PC-3 (cell line): ENCODE measurements at regions of chrX and their contacts with region 1.

Region 1: DNA sequence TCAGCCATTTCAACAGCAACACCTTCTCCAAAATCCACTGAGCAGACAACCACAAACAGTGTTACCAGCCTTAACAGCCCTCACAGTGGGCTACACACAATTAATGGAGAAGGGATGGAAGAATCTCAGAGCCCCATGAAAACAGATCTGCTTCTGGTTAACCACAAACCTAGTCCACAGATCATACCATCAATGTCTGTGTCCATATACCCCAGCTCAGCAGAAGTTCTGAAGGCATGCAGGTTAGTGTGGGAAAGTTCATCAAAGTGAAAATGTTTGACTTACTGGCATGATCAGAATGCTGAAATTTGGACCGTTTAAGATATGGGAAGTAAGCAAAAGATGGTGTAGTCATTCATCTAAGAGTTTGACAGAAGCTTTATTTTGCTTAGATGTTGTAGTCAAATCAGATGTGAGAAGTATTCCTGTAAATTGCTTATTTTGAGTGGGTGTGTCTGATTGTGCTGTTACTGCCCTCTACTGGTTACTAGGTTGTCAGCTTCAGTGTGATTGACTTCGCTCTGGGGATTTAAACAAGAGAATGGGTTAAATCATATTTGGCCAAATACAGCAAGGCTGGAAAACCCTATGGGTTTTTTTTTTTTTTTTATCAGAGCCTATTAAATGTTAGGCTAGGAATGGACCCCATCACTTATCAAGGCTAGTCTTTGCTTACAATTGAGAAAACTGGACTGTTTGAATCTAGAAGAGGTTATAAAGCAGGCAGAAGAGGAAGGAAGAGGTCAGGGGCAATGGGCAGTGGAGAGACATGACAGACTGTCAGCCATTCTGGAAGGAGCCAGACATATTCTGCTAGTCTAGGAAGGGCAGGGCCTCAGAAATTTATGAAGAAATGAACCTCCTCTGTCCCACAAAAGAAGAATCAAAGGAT is 130.3 kb downstream of the DIPK2B start:
- DNase-seq: peak; percentile 68
- ATAC-seq: peak; percentile 43; the same call in 1 of the 2 replicates
- H3K4me3 ChIP-seq: no peak overlapping the region
- H3K27ac ChIP-seq: no peak overlapping the region
- H3K4me1 ChIP-seq: peaks cover 6% of the 10 kb centered on the region; the same call in 1 of the 2 replicates
- H3K27me3 ChIP-seq: no peaks in the 10 kb centered on the region
- CTCF ChIP-seq: peak; percentile 81

Region 2: DNA sequence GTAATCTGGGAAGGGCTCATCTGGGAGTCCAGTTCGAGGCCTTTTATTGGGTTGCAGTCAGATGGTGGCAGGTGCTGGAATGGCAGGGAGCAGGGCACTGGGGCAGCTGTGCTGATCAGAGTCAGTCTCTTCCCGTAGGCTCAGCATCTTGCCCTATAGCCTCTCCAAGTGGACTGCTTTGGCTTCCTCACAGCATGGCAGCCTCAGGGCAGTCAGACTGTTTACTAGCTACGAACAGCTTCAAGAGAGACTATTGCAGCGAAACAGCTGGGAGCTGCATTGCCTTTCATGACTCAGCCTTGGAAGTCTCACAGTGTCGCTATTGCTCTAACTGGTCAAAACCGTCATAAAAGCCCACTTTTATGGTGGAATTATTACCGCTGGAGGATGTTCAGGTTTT is 253.3 kb before region 1 on chrX:
- CTCF ChIA-PET with region 1: no interaction called
- POLR2A ChIA-PET with region 1: no interaction called
- intact Hi-C with region 1: no loop called
- DNase-seq: no peak
- ATAC-seq: no peak
- H3K4me3 ChIP-seq: no peak overlapping the region
- H3K27ac ChIP-seq: no peak overlapping the region
- H3K4me1 ChIP-seq: no peaks in the 10 kb centered on the region
- H3K27me3 ChIP-seq: no peaks in the 10 kb centered on the region
- CTCF ChIP-seq: no peak

Region 3: GRCh38 chrX:44974422-44974821 is 95.9 kb before region 1 on chrX:
- CTCF ChIA-PET with region 1: interaction called, 3 read pairs
- POLR2A ChIA-PET with region 1: no interaction called
- intact Hi-C with region 1: loop called (anchors 10 kb)
- DNase-seq: peak; percentile 76
- ATAC-seq: peak; percentile 97
- H3K4me3 ChIP-seq: peak overlapping the region; percentile 46
- H3K27ac ChIP-seq: peak overlapping the region; percentile 87
- H3K4me1 ChIP-seq: peaks cover 24% of the 10 kb centered on the region
- H3K27me3 ChIP-seq: no peaks in the 10 kb centered on the region
- CTCF ChIP-seq: no peak

Region 4: DNA sequence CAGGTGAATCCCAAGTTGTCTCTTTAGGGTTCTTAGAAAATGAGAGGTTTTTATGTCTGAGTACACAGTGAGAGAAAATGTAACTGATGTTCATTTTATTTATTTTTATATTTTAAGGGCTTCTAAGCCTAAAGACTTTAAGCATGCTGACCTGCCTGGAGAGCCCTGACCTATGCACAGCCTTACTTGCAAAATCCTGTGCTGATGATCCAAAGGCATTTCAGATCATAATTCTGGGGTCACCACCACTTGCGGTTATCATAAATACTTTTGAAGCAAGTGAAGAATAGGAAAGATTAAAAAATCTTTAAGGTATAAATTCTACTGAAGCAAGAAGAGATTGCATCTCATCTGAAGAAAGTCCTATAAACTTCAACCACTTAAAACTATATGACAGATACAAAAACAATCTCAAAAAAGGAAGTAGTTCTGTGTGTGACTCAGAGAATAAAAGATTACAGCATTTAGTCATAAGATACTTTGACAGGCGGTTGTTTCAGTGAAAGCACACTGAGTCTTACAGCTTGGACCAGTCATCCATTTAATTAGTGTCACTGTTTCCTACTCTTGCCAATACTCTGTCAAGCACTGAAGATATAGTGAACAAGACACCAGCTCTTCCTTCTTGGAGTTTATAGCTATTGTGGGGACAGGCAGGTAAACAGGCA is 375.5 kb after region 1 on chrX:
- CTCF ChIA-PET with region 1: no interaction called
- POLR2A ChIA-PET with region 1: no interaction called
- intact Hi-C with region 1: no loop called
- DNase-seq: peak; percentile 92
- ATAC-seq: peak; percentile 87
- H3K4me3 ChIP-seq: no peak overlapping the region
- H3K27ac ChIP-seq: peak overlapping the region; percentile 98
- H3K4me1 ChIP-seq: peaks cover 59% of the 10 kb centered on the region
- H3K27me3 ChIP-seq: no peaks in the 10 kb centered on the region
- CTCF ChIP-seq: no peak